ENCODE measurements at regions of chr11 and their contacts with region 1.

Region 1: DNA sequence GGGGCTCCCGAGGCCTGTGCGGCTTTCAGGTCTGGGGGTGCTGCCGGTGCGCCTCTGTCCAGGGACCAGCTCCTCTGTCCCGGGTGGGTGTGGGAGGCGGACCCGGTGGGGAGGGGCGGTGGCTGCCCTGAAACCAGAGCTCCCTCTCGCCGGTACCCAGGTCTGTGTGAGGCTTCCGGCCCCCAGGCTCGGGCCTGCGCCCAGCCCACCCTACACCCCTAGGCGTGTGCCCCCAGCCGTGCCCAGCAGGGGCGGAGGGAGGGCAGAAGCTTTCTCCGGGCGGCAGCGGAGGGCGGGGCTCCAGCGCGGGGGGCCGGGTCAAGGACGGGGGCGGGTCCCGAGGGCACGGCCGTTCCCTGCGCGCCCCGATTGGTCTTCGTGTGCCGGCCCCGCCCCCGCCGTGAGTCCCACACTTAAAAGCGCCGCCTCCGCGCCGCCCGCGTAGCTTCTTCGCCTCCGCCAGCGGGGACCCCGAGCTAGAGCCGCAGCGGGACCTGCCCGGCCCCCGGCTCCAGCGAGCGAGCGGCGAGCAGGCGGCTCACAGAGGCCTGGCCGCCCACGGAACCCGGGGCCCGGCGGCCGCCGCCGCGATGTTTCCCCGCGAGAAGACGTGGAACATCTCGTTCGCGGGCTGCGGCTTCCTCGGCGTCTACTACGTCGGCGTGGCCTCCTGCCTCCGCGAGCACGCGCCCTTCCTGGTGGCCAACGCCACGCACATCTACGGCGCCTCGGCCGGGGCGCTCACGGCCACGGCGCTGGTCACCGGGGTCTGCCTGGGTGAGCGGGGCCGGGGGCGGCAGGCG is 616 bp downstream of the PNPLA2 start:
- DNase-seq: no peak
- H3K4me3 ChIP-seq: peak overlapping the region; percentile 72
- CTCF ChIP-seq: peak; percentile 25

Region 2: GRCh38 chr11:765025-765801 is 54.1 kb before region 1 on chr11:
- CTCF ChIA-PET with region 1: no interaction called
- POLR2A ChIA-PET with region 1: no interaction called
- DNase-seq: no peak
- H3K4me3 ChIP-seq: no peak overlapping the region
- CTCF ChIP-seq: peak; percentile 68

Region 3: DNA sequence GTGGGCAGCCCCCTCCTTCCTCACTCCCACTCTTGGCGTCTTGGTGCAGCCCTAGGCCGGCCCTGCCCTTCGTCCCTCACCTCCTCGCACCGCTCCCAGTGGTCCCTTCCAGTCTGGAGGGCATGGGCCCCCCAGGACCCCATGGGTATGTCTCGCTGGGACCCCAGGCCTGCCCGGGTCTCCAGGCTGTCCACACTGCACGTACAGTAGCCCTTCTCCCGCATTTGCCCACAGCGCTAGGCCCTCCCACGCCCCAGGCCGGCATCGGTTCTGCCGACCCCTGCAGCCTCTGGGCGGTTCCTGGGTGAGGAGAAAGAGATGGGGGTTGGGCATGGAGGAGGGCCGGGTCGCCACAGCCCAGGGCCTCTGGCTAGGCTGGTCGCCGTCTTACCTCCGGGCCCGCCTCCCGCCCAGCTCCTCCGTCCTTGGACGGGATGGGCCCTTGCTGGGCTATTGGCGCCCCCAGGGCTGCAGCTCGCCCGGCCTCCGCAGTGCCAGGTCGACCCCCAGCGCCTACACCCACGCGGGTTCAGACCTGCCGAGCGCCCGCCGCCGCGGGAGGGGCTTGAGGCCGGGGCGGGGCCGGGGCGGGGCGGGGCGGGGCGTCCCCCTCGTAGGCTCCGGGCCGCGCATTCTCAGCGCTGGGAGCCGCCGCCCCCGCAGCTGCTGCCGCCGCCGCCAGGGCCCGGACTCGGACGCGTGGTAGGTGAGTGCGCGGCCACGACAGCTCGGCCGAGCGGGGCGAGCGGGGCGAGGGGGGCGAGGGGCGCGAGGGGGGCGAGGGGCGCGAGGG is 13.2 kb after region 1 on chr11 and contains the start of gene CD151:
- CTCF ChIA-PET with region 1: interaction called, 6 read pairs
- POLR2A ChIA-PET with region 1: interaction called, 96 read pairs
- DNase-seq: no peak
- H3K4me3 ChIP-seq: peak within 1 kb of the TSS; percentile 76
- CTCF ChIP-seq: no peak

Region 4: DNA sequence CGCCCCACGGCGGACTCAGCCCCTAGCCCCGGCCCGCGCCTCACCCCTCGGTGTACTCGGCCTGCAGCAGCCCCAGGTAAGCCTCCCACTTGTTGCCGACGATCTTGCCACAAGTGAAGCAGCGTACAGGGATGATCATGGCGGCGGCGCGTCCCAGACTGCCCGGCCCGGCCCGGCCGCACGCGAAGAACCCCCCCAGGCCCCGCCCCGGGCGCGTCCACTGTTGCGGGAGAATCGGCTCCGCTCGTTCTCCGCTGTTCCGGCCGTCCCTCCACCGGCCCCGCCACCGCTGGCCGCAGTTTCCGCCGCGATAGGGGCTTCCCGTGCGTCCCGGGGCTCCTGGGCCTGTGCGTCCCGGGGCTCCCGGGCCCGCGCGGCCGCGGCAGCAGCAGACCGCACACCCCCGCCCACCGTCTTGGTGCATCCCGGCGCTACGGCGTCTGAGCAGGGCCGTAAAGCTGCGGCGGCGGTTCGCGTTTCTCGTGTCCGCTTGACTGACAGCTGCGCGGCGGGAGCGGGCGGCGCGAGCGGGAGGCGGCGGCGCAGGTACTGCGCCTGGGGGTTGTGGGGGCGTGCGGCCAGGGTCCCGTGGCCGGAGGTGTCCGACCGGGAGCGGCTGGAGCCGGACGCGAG is 23.2 kb after region 1 on chr11 and contains the starts of genes POLR2L and TSPAN4:
- CTCF ChIA-PET with region 1: interaction called, 4 read pairs
- POLR2A ChIA-PET with region 1: interaction called, 12 read pairs
- DNase-seq: no peak
- H3K4me3 ChIP-seq: peak within 1 kb of the TSS; percentile 86
- CTCF ChIP-seq: no peak